CD4-positive, alpha-beta T cell (primary cell): ENCODE measurements at regions of chr11 and their contacts with region 1.

Region 1: GRCh38 chr11:34438529-34439507 is at the start of gene CAT:
- DNase-seq: peak; percentile 93 to 98 (median 98)
- ATAC-seq: peak; percentile 95
- H3K4me3 ChIP-seq: peak within 1 kb of the TSS; percentile 81
- H3K4me3 Mint-ChIP-seq: peak within 1 kb of the TSS; percentile 93
- H3K27ac ChIP-seq: peak within 1 kb of the TSS; percentile 57 to 77
- H3K27ac Mint-ChIP-seq: peak within 1 kb of the TSS; percentile 88
- H3K4me1 ChIP-seq: peaks cover 22% of the 10 kb centered on the region
- H3K4me1 Mint-ChIP-seq: peaks cover 47% of the 10 kb centered on the region
- H3K27me3 ChIP-seq: no peaks in the 10 kb centered on the region
- H3K27me3 Mint-ChIP-seq: no peaks in the 10 kb centered on the region
- CTCF ChIP-seq: no peak
- total RNA-seq, gene CAT: 8.5 to 9.8 TPM

Region 2: GRCh38 chr11:33700425-33701271 is 738.2 kb before region 1 on chr11 and contains the start of gene C11orf91:
- CTCF ChIA-PET with region 1: no interaction called
- POLR2A ChIA-PET with region 1: no interaction called
- intact Hi-C with region 1: loop called in 1 of 2 experiments (anchors 10 kb)
- DNase-seq: peak; percentile 84 to 98 (median 94)
- ATAC-seq: peak; percentile 93
- H3K4me3 ChIP-seq: peak within 1 kb of the TSS; percentile 68
- H3K4me3 Mint-ChIP-seq: peak within 1 kb of the TSS; percentile 95
- H3K27ac ChIP-seq: no peak within 1 kb of the TSS
- H3K27ac Mint-ChIP-seq: peak within 1 kb of the TSS; percentile 64
- H3K4me1 ChIP-seq: peaks cover 14% of the 10 kb centered on the region
- H3K4me1 Mint-ChIP-seq: peaks cover 33% of the 10 kb centered on the region
- H3K27me3 ChIP-seq: no peaks in the 10 kb centered on the region
- H3K27me3 Mint-ChIP-seq: peaks cover 10% of the 10 kb centered on the region
- CTCF ChIP-seq: no peak
- total RNA-seq, gene C11orf91: 0.45 TPM in 1 of 2 experiments, not detected in the other

Region 3: DNA sequence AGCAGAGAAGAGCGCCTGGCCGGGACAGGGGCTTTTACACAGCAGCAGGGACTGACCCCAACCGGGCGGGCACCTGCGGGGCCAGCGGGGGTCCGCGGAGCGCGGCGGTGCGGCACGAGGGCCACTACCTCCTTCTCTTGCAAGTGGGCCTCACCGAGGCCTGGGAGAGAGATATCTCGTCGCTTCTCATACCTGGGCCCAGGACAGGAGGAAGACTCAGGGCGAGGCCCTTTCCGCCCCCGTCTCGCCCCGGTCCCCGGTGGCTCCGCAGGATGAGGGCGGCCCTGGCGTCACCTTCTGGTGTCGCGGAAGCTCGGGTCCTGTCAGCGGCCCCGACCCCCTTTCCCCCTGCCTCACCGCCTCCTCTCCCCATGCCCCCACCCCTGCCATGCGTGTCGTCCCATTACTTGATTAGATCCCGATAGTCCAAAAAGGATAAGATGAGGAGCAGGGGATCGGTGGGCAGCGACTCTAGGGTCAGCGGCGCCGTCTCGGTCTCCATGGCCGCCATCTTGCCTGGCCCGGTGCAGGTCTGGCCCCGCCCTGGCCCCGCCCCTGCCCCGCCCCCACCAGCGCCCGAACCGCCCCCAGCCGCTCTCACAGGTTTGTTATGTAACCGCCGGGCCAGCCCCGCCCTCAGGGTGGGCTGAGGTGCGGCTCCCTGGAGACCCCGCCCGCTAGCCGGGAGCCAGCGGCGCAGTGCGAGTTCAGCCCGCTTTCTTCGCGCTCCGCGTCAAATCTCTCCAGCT is 664.7 kb before region 1 on chr11 and contains the start of gene FBXO3:
- CTCF ChIA-PET with region 1: no interaction called
- POLR2A ChIA-PET with region 1: no interaction called
- intact Hi-C with region 1: loop called in 1 of 2 experiments (anchors 2 kb)
- DNase-seq: peak; percentile 78 to 95 (median 86)
- ATAC-seq: peak; percentile 86
- H3K4me3 ChIP-seq: peak within 1 kb of the TSS; percentile 73
- H3K4me3 Mint-ChIP-seq: peak within 1 kb of the TSS; percentile 97
- H3K27ac ChIP-seq: peak within 1 kb of the TSS; percentile 64 to 75
- H3K27ac Mint-ChIP-seq: peak within 1 kb of the TSS; percentile 97
- H3K4me1 ChIP-seq: peaks cover 41% of the 10 kb centered on the region
- H3K4me1 Mint-ChIP-seq: peaks cover 61% of the 10 kb centered on the region
- H3K27me3 ChIP-seq: peaks cover 0 to 7% of the 10 kb centered on the region in 2 experiments
- H3K27me3 Mint-ChIP-seq: peaks cover 8% of the 10 kb centered on the region
- CTCF ChIP-seq: no peak
- total RNA-seq, gene FBXO3: 62.0 to 63.4 TPM

Region 4: GRCh38 chr11:34250732-34251639 is 187.8 kb before region 1 on chr11:
- CTCF ChIA-PET with region 1: no interaction called
- POLR2A ChIA-PET with region 1: no interaction called
- intact Hi-C with region 1: loop called in 1 of 2 experiments (anchors 10 kb)
- DNase-seq: peak; percentile 30 to 87 (median 67)
- ATAC-seq: peak; percentile 94
- H3K4me3 ChIP-seq: peak overlapping the region; percentile 26
- H3K4me3 Mint-ChIP-seq: peak overlapping the region; percentile 14
- H3K27ac ChIP-seq: no peak overlapping the region
- H3K27ac Mint-ChIP-seq: peak overlapping the region; percentile 60
- H3K4me1 ChIP-seq: peaks cover 48% of the 10 kb centered on the region
- H3K4me1 Mint-ChIP-seq: peaks cover 63% of the 10 kb centered on the region
- H3K27me3 ChIP-seq: no peaks in the 10 kb centered on the region
- H3K27me3 Mint-ChIP-seq: no peaks in the 10 kb centered on the region
- CTCF ChIP-seq: no peak

Region 5: DNA sequence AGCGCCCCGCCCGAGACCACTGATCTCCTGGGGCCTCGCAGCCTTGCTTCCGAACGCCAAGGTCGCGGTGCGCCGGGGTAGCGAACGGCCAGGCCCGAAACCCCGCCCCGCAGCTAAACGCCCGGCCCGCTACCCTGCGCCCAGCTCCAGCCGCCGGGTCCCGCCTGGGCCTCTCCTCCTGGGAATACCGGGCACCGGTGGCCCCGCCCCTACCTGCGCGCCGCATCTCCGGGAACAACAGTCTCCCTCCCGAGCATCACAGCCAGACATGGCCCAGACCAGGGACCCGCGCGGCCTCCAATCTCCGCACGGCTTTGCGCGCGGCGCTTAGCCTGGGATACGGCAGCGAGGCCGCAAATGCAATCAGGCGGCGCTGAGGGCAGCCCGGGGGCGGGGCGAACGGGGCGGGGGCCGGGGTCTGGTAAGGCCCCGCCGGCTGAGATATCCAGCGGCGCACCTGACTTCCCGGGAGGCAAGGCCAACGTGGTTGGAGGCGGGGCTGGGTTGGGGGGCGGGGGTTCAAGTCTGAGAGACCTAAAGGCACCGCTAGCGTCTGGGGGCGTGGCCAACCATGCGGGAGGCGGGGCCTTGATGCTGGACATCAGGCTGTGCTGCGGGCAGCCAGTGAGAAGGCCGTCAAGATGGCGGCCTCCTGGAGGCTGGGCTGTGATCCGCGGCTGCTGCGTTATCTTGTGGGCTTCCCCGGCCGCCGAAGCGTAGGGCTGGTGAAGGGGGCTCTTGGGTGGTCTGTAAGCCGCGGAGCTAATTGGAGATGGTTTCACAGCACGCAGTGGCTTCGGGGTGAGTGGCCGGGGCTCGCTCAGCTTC is 477.4 kb after region 1 on chr11 and contains the starts of genes APIP and PDHX:
- CTCF ChIA-PET with region 1: no interaction called
- POLR2A ChIA-PET with region 1: interaction called, 3 read pairs
- intact Hi-C with region 1: loop called in 1 of 2 experiments (anchors 5 kb)
- DNase-seq: peak; percentile 91 to 99 (median 95)
- ATAC-seq: peak; percentile 90
- H3K4me3 ChIP-seq: peak within 1 kb of the TSS; percentile 94
- H3K4me3 Mint-ChIP-seq: peak within 1 kb of the TSS; percentile 96
- H3K27ac ChIP-seq: peak within 1 kb of the TSS; percentile 80 to 93
- H3K27ac Mint-ChIP-seq: peak within 1 kb of the TSS; percentile 93
- H3K4me1 ChIP-seq: peaks cover 24% of the 10 kb centered on the region
- H3K4me1 Mint-ChIP-seq: peaks cover 57% of the 10 kb centered on the region
- H3K27me3 ChIP-seq: no peaks in the 10 kb centered on the region
- H3K27me3 Mint-ChIP-seq: no peaks in the 10 kb centered on the region
- CTCF ChIP-seq: no peak
- total RNA-seq, gene APIP: 7.1 to 8.3 TPM
- total RNA-seq, gene PDHX: 17.3 to 17.4 TPM

Region 6: DNA sequence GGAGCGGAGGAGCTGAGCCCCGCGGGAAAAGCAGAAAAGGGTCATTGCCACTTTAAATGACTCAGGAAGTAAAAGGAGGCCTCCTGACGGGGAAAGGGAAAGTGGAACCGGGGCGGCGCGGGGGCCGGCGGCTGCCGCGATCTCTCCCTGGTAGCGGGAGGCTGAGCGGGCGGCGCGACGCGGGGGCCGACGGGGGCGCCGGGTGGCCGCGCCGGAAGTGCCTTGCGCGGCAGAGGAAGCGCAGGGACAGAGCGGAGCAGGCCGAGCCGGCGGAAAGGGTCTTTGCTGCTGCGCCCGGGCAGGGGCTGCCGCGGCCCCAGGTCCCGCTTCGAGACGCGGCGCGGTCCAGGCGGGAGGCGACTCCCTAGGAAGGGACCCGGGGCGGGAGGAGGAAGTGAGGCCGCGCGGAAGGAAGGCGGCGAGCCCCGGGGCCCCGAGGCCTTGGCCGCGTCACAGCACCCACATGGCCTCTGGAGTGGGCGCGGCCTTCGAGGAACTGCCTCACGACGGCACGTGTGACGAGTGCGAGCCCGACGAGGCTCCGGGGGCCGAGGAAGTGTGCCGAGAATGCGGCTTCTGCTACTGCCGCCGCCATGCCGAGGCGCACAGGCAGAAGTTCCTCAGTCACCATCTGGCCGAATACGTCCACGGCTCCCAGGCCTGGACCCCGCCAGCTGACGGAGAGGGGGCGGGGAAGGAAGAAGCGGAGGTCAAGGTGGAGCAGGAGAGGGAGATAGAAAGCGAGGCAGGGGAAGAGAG is 1224.0 kb after region 1 on chr11 and contains the start of gene TRIM44:
- CTCF ChIA-PET with region 1: no interaction called
- POLR2A ChIA-PET with region 1: no interaction called
- intact Hi-C with region 1: loop called in 1 of 2 experiments (anchors 10 kb)
- DNase-seq: peak; percentile 61 to 91 (median 74)
- ATAC-seq: peak; percentile 80
- H3K4me3 ChIP-seq: peak within 1 kb of the TSS; percentile 91
- H3K4me3 Mint-ChIP-seq: peak within 1 kb of the TSS; percentile 90
- H3K27ac ChIP-seq: peak within 1 kb of the TSS; percentile 76 to 80
- H3K27ac Mint-ChIP-seq: peak within 1 kb of the TSS; percentile 90
- H3K4me1 ChIP-seq: peaks cover 25% of the 10 kb centered on the region
- H3K4me1 Mint-ChIP-seq: peaks cover 53% of the 10 kb centered on the region
- H3K27me3 ChIP-seq: peaks cover 0 to 4% of the 10 kb centered on the region in 2 experiments
- H3K27me3 Mint-ChIP-seq: peaks cover 8% of the 10 kb centered on the region
- CTCF ChIP-seq: no peak
- total RNA-seq, gene TRIM44: 32.1 to 36.7 TPM